ENCODE measurements at regions of chr16 and their contacts with region 1.

Region 1: DNA sequence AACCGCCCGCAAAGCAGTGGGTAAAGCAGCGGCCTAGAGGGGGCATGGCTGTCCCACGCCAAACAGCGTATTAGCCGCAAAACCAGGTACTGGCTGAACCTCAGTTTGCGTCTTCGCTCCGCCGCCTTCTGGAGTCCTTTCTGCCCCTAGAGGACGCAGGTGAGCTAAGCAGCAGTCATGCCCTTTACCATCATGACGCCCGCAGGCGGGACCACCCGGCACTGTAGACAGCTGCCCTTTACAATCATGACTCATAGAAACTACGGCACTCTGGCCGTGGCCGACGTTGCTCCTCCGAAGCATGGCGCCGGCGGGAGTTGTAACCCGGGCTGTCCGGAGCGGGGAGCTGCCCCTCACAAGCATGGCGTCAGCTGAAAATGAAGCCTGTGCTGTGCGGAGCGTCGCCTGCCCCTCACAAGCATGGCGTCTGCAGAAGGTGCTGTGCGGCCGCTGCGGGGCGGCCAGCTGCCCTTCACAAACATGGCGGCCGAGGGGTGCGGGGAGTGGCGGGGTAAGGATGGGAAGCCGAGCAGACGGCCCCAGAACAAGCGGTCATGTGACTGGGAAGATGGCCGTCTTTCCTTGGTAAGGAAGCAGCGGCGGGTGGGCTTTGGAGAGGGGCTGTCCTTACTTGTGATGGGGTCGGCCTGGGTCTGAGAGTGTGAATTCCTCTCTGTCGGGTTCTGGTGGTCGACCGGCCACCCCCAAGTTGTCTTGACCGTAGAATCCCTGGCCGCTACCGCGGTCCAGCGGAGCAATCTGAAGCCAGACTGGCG is at the start of gene VPS35L:
- DNase-seq: peak; percentile 98
- H3K4me3 ChIP-seq: peak within 1 kb of the TSS; percentile 65 to 94 (median 83)
- H3K27ac ChIP-seq: peak within 1 kb of the TSS; percentile 88 to 94 (median 92)
- H3K4me1 ChIP-seq: peaks cover 0 to 20% (median 14%) of the 10 kb centered on the region in 4 donors
- H3K27me3 ChIP-seq: no peaks in the 10 kb centered on the region
- CTCF ChIP-seq: peak; percentile 61 to 93 (median 80)
- EP300 ChIP-seq: no peak
- POLR2A ChIP-seq: peak; percentile 45
- total RNA-seq, gene VPS35L: 40.0 to 89.8 (median 51.5) TPM

Region 2: GRCh38 chr16:19458718-19459379 is 96.5 kb before region 1 on chr16:
- in situ Hi-C with region 1: no loop called
- intact Hi-C with region 1: no loop called
- DNase-seq: no peak
- H3K4me3 ChIP-seq: no peak overlapping the region
- H3K27ac ChIP-seq: no peak overlapping the region
- H3K4me1 ChIP-seq: peaks cover 0 to 5% (median 2%) of the 10 kb centered on the region in 4 donors
- H3K27me3 ChIP-seq: no peaks in the 10 kb centered on the region
- CTCF ChIP-seq: no peak
- EP300 ChIP-seq: no peak
- POLR2A ChIP-seq: no peak

Region 3: GRCh38 chr16:19521471-19522396 is 33.6 kb before region 1 on chr16 and contains the start of gene GDE1:
- in situ Hi-C with region 1: no loop called
- intact Hi-C with region 1: loop called (anchors 5 kb)
- DNase-seq: peak; percentile 97
- H3K4me3 ChIP-seq: peak within 1 kb of the TSS; percentile 70 to 95 (median 85)
- H3K27ac ChIP-seq: peak within 1 kb of the TSS; percentile 96 to 99 (median 98)
- H3K4me1 ChIP-seq: peaks cover 14 to 71% (median 42%) of the 10 kb centered on the region in 4 donors
- H3K27me3 ChIP-seq: no peaks in the 10 kb centered on the region
- CTCF ChIP-seq: peak in 4 of 5 experiments; percentile 13 to 41 (median 28)
- EP300 ChIP-seq: no peak
- POLR2A ChIP-seq: peak; percentile 94
- total RNA-seq, gene GDE1: 47.5 to 120 (median 96.8) TPM

Measured in transverse colon (tissue), 4 donors.